Heart left ventricle (tissue), 16 donors: ENCODE measurements at regions of chr10 and their contacts with region 1.

Region 1: GRCh38 chr10:68666280-68666760 is 54.7 kb upstream of the CCAR1 start:
- DNase-seq: no peak
- ATAC-seq: no peak
- H3K4me3 ChIP-seq: no peak overlapping the region
- H3K27ac ChIP-seq: no peak overlapping the region
- H3K4me1 ChIP-seq: no peaks in the 10 kb centered on the region
- H3K27me3 ChIP-seq: no peaks in the 10 kb centered on the region
- CTCF ChIP-seq: no peak
- POLR2A ChIP-seq: no peak

Region 2: DNA sequence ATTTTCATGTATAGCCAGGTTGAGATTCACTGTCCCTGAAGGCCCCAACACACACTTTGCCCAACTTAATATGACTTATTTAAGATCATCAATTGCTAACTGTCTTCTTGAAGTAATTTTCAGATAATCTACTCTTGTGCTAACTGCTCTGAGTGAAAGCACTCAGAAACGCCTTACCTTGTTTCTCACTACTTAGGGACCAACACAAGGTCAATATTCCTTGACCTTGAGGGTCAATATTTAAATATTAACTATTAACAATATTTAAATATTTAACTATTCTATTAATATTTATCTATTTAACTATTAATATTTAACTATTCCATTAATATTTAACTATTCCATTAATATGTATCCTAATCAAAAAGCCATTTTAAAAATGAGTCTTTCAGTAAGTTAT is 360.5 kb before region 1 on chr10:
- intact Hi-C with region 1: no loop called
- DNase-seq: no peak
- ATAC-seq: no peak
- H3K4me3 ChIP-seq: no peak overlapping the region
- H3K27ac ChIP-seq: no peak overlapping the region
- H3K4me1 ChIP-seq: peaks cover 0 to 6% (median 1%) of the 10 kb centered on the region in 12 donors
- H3K27me3 ChIP-seq: no peaks in the 10 kb centered on the region
- CTCF ChIP-seq: no peak
- POLR2A ChIP-seq: no peak

Region 3: GRCh38 chr10:68792115-68792514 is 125.8 kb after region 1 on chr10:
- intact Hi-C with region 1: no loop called
- DNase-seq: no peak
- ATAC-seq: no peak
- H3K4me3 ChIP-seq: no peak overlapping the region
- H3K27ac ChIP-seq: no peak overlapping the region
- H3K4me1 ChIP-seq: no peaks in the 10 kb centered on the region
- H3K27me3 ChIP-seq: no peaks in the 10 kb centered on the region
- CTCF ChIP-seq: peak in 6 of 12 donors; percentile 12 to 27 (median 16)
- POLR2A ChIP-seq: no peak

Region 4: DNA sequence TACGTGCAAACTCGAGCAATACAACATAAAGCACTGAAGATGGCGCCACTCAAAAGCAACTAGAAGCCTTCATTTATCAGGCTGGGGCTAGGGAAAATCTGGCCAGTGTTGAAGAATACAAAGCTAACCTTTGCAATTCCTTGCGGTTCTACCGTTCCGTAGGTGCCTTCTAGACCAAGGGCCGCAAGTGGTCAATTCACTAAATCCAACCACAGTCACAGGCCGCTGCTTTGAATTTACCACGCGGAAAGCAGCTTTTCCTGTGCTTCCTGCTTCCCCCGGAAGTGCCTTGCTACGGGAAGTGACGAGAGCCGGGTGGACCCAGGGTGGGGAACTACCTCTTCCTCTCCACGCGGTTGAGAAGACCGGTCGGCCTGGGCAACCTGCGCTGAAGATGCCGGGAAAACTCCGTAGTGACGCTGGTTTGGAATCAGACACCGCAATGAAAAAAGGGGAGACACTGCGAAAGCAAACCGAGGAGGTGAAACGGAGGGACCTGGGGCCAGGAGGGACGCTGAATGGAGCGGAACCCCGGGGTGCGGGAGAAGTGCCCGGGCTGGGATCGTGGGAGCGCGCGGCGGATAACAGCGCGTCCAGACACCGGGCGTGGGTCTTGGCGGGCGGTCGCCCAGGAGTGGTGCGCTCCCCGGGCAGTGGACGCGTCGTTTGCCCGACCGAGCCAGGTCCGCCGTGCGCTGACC is 289.7 kb after region 1 on chr10 and contains the start of gene DDX21:
- intact Hi-C with region 1: loop called in 1 of 10 experiments (anchors 5 kb)
- DNase-seq: peak; percentile 91 to 94 (median 91)
- ATAC-seq: peak; percentile 97 to 98 (median 98)
- H3K4me3 ChIP-seq: peak within 1 kb of the TSS; percentile 51 to 96 (median 88)
- H3K27ac ChIP-seq: peak within 1 kb of the TSS; percentile 35 to 97 (median 84)
- H3K4me1 ChIP-seq: peaks cover 4 to 44% (median 21%) of the 10 kb centered on the region in 12 donors
- H3K27me3 ChIP-seq: no peaks in the 10 kb centered on the region
- CTCF ChIP-seq: peak; percentile 26 to 74 (median 56)
- POLR2A ChIP-seq: peak in 1 of 2 donors; percentile 52
- total RNA-seq, gene DDX21: 18.5 to 37.9 (median 26.2) TPM